ENCODE measurements at regions of chr2 and their contacts with region 1.

Region 1: DNA sequence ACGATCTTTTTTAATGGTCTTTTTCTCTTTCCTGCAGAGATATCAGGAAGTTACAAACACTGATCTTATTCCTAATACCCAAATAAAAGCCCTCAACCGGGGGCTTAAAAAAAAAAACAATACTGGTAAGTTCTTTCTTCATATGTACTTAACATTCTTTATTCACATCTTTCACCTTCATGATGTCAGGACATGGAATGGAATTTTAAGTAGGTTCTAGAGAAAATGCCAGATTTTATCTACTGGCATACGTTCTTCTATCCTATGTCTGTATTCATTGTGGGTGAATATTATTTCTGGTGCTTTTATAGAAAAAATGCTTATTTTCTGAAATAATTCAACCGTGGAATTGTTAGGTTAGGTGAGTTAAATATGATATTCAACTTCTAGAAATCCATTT is 6.1 kb downstream of the TAF1B start:
- DNase-seq: no peak
- ATAC-seq: no peak
- H3K4me3 ChIP-seq: no peak overlapping the region
- H3K27ac ChIP-seq: no peak overlapping the region
- H3K4me1 ChIP-seq: peaks cover 3% of the 10 kb centered on the region; the same call in 1 of the 2 replicates
- H3K27me3 ChIP-seq: no peaks in the 10 kb centered on the region
- CTCF ChIP-seq: no peak
- EP300 ChIP-seq: no peak
- POLR2A ChIP-seq: no peak
- RAD21 ChIP-seq: no peak

Region 2: GRCh38 chr2:9752441-9753275 is 96.7 kb before region 1 on chr2:
- CTCF ChIA-PET with region 1: no interaction called
- POLR2A ChIA-PET with region 1: no interaction called
- RAD21 ChIA-PET with region 1: no interaction called
- SMC1A ChIA-PET with region 1: no interaction called
- in situ Hi-C with region 1: no loop called
- intact Hi-C with region 1: no loop called
- DNase-seq: no peak
- ATAC-seq: peak; percentile 18; the same call in 2 of the 3 replicates
- H3K4me3 ChIP-seq: peak overlapping the region; percentile 23; the same call in 1 of the 2 replicates
- H3K27ac ChIP-seq: peak overlapping the region; percentile 7; the same call in 1 of the 2 replicates
- H3K4me1 ChIP-seq: peaks cover 47% of the 10 kb centered on the region
- H3K27me3 ChIP-seq: peaks cover 3 to 13% of the 10 kb centered on the region in 2 experiments
- CTCF ChIP-seq: no peak
- EP300 ChIP-seq: no peak
- POLR2A ChIP-seq: no peak
- RAD21 ChIP-seq: no peak

Region 3: GRCh38 chr2:9877733-9878125 is 28.4 kb after region 1 on chr2:
- CTCF ChIA-PET with region 1: no interaction called
- POLR2A ChIA-PET with region 1: interaction called, 5 read pairs
- RAD21 ChIA-PET with region 1: no interaction called
- SMC1A ChIA-PET with region 1: interaction called, 3 read pairs
- in situ Hi-C with region 1: no loop called
- intact Hi-C with region 1: loop called (anchors 1 kb)
- DNase-seq: no peak
- ATAC-seq: no peak
- H3K4me3 ChIP-seq: no peak overlapping the region
- H3K27ac ChIP-seq: no peak overlapping the region
- H3K4me1 ChIP-seq: no peaks in the 10 kb centered on the region
- H3K27me3 ChIP-seq: no peaks in the 10 kb centered on the region
- CTCF ChIP-seq: no peak
- EP300 ChIP-seq: no peak
- POLR2A ChIP-seq: no peak
- RAD21 ChIP-seq: no peak